Activated naive CD4-positive, alpha-beta T cell treated with anti-CD3 and anti-CD28 coated beads for 36 hours (primary cell): ENCODE measurements at regions of chr14 and their contacts with region 1.

Region 1: DNA sequence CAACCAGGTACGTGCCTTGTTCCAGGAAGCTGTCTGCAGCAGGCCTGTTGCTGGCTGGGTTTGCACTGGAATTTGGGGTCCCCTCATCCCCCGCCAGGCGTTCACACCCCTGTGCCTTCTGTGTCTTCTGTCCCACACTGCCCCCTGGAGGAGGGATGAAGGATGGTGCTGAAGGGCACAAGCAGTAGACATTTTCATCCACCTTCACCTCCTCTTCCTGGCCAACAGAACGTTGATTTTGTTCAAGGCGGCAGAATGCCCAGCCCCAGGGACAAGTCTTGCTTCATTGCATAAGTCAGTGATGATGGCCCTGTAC is 122.1 kb downstream of the CALM1 start:
- DNase-seq: peak; percentile 71
- H3K4me3 Mint-ChIP-seq: no peak overlapping the region
- H3K27ac Mint-ChIP-seq: no peak overlapping the region
- H3K4me1 Mint-ChIP-seq: no peaks in the 10 kb centered on the region
- H3K27me3 Mint-ChIP-seq: no peaks in the 10 kb centered on the region

Region 2: GRCh38 chr14:90072350-90072749 is 446.5 kb before region 1 on chr14:
- CTCF ChIA-PET with region 1: no interaction called
- intact Hi-C with region 1: no loop called
- DNase-seq: no peak
- H3K4me3 Mint-ChIP-seq: no peak overlapping the region
- H3K27ac Mint-ChIP-seq: no peak overlapping the region
- H3K4me1 Mint-ChIP-seq: no peaks in the 10 kb centered on the region
- H3K27me3 Mint-ChIP-seq: peaks cover 18% of the 10 kb centered on the region

Region 3: DNA sequence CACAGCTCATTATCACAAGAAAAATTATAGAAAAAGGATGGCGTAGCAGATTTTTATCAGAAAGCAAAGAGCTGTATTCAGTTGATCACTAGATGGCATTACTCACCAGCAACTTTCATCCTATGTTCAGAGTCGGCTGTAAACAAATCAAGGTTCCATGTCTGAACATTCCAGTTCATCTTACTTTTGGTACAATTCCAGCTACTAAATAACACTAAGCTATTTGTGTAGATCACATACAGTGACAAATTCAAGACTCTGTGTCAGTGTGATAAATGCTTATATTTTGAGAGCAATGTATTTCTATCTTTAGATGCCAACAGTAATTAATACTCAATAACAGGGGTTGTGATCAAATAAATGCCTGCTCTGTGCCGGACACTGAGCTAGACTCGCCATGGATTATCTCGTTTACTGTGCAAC is 217.2 kb before region 1 on chr14:
- CTCF ChIA-PET with region 1: interaction called, 9 read pairs
- intact Hi-C with region 1: loop called (anchors 1 kb)
- DNase-seq: no peak
- H3K4me3 Mint-ChIP-seq: no peak overlapping the region
- H3K27ac Mint-ChIP-seq: no peak overlapping the region
- H3K4me1 Mint-ChIP-seq: peaks cover 8% of the 10 kb centered on the region
- H3K27me3 Mint-ChIP-seq: no peaks in the 10 kb centered on the region

Region 4: GRCh38 chr14:90368946-90369721 is 149.8 kb before region 1 on chr14:
- CTCF ChIA-PET with region 1: interaction called, 3 read pairs
- intact Hi-C with region 1: loop called (anchors 1 kb)
- DNase-seq: no peak
- H3K4me3 Mint-ChIP-seq: no peak overlapping the region
- H3K27ac Mint-ChIP-seq: no peak overlapping the region
- H3K4me1 Mint-ChIP-seq: no peaks in the 10 kb centered on the region
- H3K27me3 Mint-ChIP-seq: no peaks in the 10 kb centered on the region